ENCODE measurements at regions of chr3 and their contacts with region 1.

Region 1: GRCh38 chr3:38521391-38521987 is 25.3 kb downstream of the EXOG start:
- DNase-seq: peak in 2 of 5 donors; percentile 57 to 58
- ATAC-seq: peak; percentile 43 to 68 (median 61)
- H3K4me3 ChIP-seq: no peak overlapping the region
- H3K27ac ChIP-seq: peak overlapping the region in 8 of 12 donors; percentile 10 to 79 (median 64)
- H3K4me1 ChIP-seq: peaks cover 0 to 38% (median 9%) of the 10 kb centered on the region in 12 donors
- H3K27me3 ChIP-seq: no peaks in the 10 kb centered on the region
- CTCF ChIP-seq: peak; percentile 86 to 97 (median 92)
- POLR2A ChIP-seq: no peak

Region 2: GRCh38 chr3:38579551-38580449 is 58.3 kb after region 1 on chr3:
- intact Hi-C with region 1: loop called in 2 of 10 experiments (anchors 5 kb)
- DNase-seq: peak; percentile 63 to 85 (median 75)
- ATAC-seq: peak; percentile 73 to 79 (median 75)
- H3K4me3 ChIP-seq: no peak overlapping the region
- H3K27ac ChIP-seq: peak overlapping the region in 11 of 12 donors; percentile 71 to 99 (median 89)
- H3K4me1 ChIP-seq: peaks cover 0 to 85% (median 36%) of the 10 kb centered on the region in 12 donors
- H3K27me3 ChIP-seq: no peaks in the 10 kb centered on the region
- CTCF ChIP-seq: no peak
- POLR2A ChIP-seq: peak in 1 of 2 donors; percentile 0

Region 3: GRCh38 chr3:38689774-38690173 is 168.3 kb after region 1 on chr3:
- intact Hi-C with region 1: no loop called
- DNase-seq: no peak
- ATAC-seq: peak in 2 of 4 donors; percentile 50 to 52
- H3K4me3 ChIP-seq: no peak overlapping the region
- H3K27ac ChIP-seq: no peak overlapping the region
- H3K4me1 ChIP-seq: no peaks in the 10 kb centered on the region
- H3K27me3 ChIP-seq: no peaks in the 10 kb centered on the region
- CTCF ChIP-seq: peak in 8 of 12 donors; percentile 5 to 35 (median 28)
- POLR2A ChIP-seq: no peak

Region 4: DNA sequence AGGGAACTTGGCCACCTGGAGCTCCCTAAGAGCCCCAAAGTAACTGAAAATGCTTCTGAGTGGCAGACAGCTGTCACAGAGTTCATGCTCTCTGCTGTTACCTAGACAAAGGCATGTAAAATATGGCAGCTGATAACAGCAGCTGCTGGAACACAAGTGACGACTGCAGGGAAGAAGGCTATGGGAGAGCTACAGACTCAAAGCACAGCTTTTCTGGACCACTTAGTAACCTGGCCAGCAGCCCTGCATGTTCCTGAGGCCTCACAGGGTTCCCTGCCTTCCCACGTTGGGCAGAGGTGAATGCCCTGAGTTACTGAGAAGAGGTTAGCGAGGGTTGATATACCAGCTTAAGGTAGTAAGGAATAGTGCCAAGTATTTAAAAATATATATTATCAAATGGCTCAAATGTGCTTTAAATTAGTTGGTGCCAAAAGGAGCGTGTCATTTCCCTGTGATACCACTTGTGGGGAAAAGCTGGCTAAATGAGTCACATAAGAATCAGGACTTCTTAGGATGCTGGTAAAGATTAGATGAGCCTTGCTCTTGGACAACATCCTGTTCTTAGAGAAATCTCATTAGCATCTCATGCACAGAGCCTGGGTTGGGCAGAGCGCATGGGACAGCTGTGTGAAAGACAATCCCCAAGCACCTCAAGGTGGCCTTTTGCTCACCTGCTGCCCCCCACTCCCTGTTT is 204.4 kb after region 1 on chr3:
- intact Hi-C with region 1: loop called in 1 of 10 experiments (anchors 10 kb)
- DNase-seq: peak in 4 of 5 donors; percentile 60 to 87 (median 74)
- ATAC-seq: peak; percentile 90 to 92 (median 92)
- H3K4me3 ChIP-seq: no peak overlapping the region
- H3K27ac ChIP-seq: peak overlapping the region in 11 of 12 donors; percentile 38 to 87 (median 74)
- H3K4me1 ChIP-seq: peaks cover 0 to 36% (median 16%) of the 10 kb centered on the region in 12 donors
- H3K27me3 ChIP-seq: no peaks in the 10 kb centered on the region
- CTCF ChIP-seq: no peak
- POLR2A ChIP-seq: no peak

Region 5: GRCh38 chr3:38843898-38844297 is 322.4 kb after region 1 on chr3:
- intact Hi-C with region 1: loop called in 8 of 10 experiments (anchors 5 to 10 kb)
- DNase-seq: peak in 2 of 5 donors; percentile 16 to 26
- ATAC-seq: peak in 3 of 4 donors; percentile 85 to 94 (median 93)
- H3K4me3 ChIP-seq: no peak overlapping the region
- H3K27ac ChIP-seq: no peak overlapping the region
- H3K4me1 ChIP-seq: no peaks in the 10 kb centered on the region
- H3K27me3 ChIP-seq: no peaks in the 10 kb centered on the region
- CTCF ChIP-seq: peak; percentile 18 to 60 (median 53)
- POLR2A ChIP-seq: no peak

Region 6: GRCh38 chr3:39000008-39000450 is 478.5 kb after region 1 on chr3:
- intact Hi-C with region 1: loop called in 2 of 10 experiments (anchors 5 to 10 kb)
- DNase-seq: no peak
- ATAC-seq: peak in 3 of 4 donors; percentile 47 to 59 (median 49)
- H3K4me3 ChIP-seq: no peak overlapping the region
- H3K27ac ChIP-seq: no peak overlapping the region
- H3K4me1 ChIP-seq: no peaks in the 10 kb centered on the region
- H3K27me3 ChIP-seq: peaks cover 0 to 2% (median 0%) of the 10 kb centered on the region in 9 donors
- CTCF ChIP-seq: peak; percentile 40 to 79 (median 62)
- POLR2A ChIP-seq: no peak

Measured in heart left ventricle (tissue), 16 donors.